ENCODE measurements at regions of chr17 and their contacts with region 1.

Region 1: GRCh38 chr17:31216053-31216751 is 80.8 kb downstream of the OMG start:
- DNase-seq: peak in 1 of 2 experiments; percentile 24
- H3K4me3 ChIP-seq: no peak overlapping the region
- H3K4me3 Mint-ChIP-seq: no peak overlapping the region
- H3K27ac Mint-ChIP-seq: no peak overlapping the region
- H3K4me1 ChIP-seq: no peaks in the 10 kb centered on the region
- H3K4me1 Mint-ChIP-seq: no peaks in the 10 kb centered on the region
- H3K27me3 ChIP-seq: no peaks in the 10 kb centered on the region
- H3K27me3 Mint-ChIP-seq: no peaks in the 10 kb centered on the region
- CTCF ChIP-seq: peak; percentile 16 to 61

Region 2: GRCh38 chr17:30906101-30906911 is 309.9 kb before region 1 on chr17 and contains the start of gene TEFM:
- CTCF ChIA-PET with region 1: no interaction called
- POLR2A ChIA-PET with region 1: no interaction called
- intact Hi-C with region 1: loop called (anchors 10 kb)
- DNase-seq: peak; percentile 92 to 95
- H3K4me3 ChIP-seq: peak within 1 kb of the TSS; percentile 77
- H3K4me3 Mint-ChIP-seq: peak within 1 kb of the TSS; percentile 82
- H3K27ac Mint-ChIP-seq: peak within 1 kb of the TSS; percentile 81
- H3K4me1 ChIP-seq: no peaks in the 10 kb centered on the region
- H3K4me1 Mint-ChIP-seq: peaks cover 14% of the 10 kb centered on the region
- H3K27me3 ChIP-seq: no peaks in the 10 kb centered on the region
- H3K27me3 Mint-ChIP-seq: no peaks in the 10 kb centered on the region
- CTCF ChIP-seq: no peak
- total RNA-seq, gene TEFM: 16.8 and 18.7 TPM in 2 replicates

Region 3: DNA sequence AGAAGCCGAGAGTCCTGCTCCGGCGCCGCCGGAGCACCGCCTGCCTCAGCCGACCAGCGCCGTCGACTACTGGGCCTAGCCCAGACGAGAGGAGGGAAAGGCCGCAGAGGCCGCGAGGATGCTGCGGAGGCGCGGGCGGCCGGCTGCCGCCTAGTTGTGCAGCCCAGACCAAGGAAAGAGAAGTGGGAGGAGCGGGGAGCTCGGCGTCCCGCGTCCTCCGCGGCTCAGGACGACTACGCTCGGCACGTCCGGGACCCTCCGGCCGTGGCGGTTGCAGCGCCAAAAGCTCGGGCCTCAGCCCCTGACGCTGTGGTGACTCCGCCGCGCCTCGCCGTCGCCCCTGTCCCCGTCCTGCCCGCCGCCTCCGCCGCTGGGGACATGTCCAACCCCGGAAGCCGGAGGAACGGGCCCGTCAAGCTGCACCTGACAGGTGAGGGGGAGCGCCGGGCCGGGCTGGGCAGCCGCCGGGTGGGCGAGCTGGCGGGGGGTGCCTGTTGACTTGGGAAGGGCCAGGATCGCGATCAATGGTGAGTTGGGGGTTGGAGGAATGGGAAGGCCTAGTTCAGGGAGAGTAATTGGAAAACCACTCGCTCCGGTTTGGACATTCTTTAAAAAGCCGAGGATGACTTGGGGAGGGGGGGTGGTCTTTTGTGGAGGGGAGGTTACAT is 207.7 kb before region 1 on chr17:
- CTCF ChIA-PET with region 1: interaction called, 3 read pairs
- POLR2A ChIA-PET with region 1: no interaction called
- intact Hi-C with region 1: loop called (anchors 1 kb)
- DNase-seq: peak; percentile 67 to 71
- H3K4me3 ChIP-seq: peak overlapping the region; percentile 74
- H3K4me3 Mint-ChIP-seq: peak overlapping the region; percentile 79
- H3K27ac Mint-ChIP-seq: peak overlapping the region; percentile 76
- H3K4me1 ChIP-seq: no peaks in the 10 kb centered on the region; the same call in 1 of the 2 replicates
- H3K4me1 Mint-ChIP-seq: peaks cover 18% of the 10 kb centered on the region
- H3K27me3 ChIP-seq: no peaks in the 10 kb centered on the region
- H3K27me3 Mint-ChIP-seq: no peaks in the 10 kb centered on the region
- CTCF ChIP-seq: no peak

Region 4: GRCh38 chr17:31094600-31095238 is 121.5 kb before region 1 on chr17 and contains the start of gene NF1:
- CTCF ChIA-PET with region 1: no interaction called
- POLR2A ChIA-PET with region 1: interaction called, 4 read pairs
- intact Hi-C with region 1: loop called (anchors 5 kb)
- DNase-seq: peak; percentile 96 to 97
- H3K4me3 ChIP-seq: peak within 1 kb of the TSS; percentile 98
- H3K4me3 Mint-ChIP-seq: peak within 1 kb of the TSS; percentile 94
- H3K27ac Mint-ChIP-seq: peak within 1 kb of the TSS; percentile 57
- H3K4me1 ChIP-seq: 0 out of 2 replicates have a peak, but pooled peaks cover 9% of the 10 kb centered on the region
- H3K4me1 Mint-ChIP-seq: peaks cover 10% of the 10 kb centered on the region
- H3K27me3 ChIP-seq: no peaks in the 10 kb centered on the region
- H3K27me3 Mint-ChIP-seq: no peaks in the 10 kb centered on the region
- CTCF ChIP-seq: no peak
- total RNA-seq, gene NF1: 62.4 and 69.5 TPM in 2 replicates

Region 5: GRCh38 chr17:31226373-31226772 is 10.2 kb after region 1 on chr17:
- CTCF ChIA-PET with region 1: no interaction called
- POLR2A ChIA-PET with region 1: no interaction called
- intact Hi-C with region 1: no loop called
- DNase-seq: no peak
- H3K4me3 ChIP-seq: no peak overlapping the region
- H3K4me3 Mint-ChIP-seq: no peak overlapping the region
- H3K27ac Mint-ChIP-seq: no peak overlapping the region
- H3K4me1 ChIP-seq: no peaks in the 10 kb centered on the region
- H3K4me1 Mint-ChIP-seq: no peaks in the 10 kb centered on the region
- H3K27me3 ChIP-seq: no peaks in the 10 kb centered on the region
- H3K27me3 Mint-ChIP-seq: no peaks in the 10 kb centered on the region
- CTCF ChIP-seq: no peak

Measured in Caco-2 (cell line).